Endothelial cell of umbilical vein (primary cell): ENCODE measurements at regions of chr18 and their contacts with region 1.

Region 1: DNA sequence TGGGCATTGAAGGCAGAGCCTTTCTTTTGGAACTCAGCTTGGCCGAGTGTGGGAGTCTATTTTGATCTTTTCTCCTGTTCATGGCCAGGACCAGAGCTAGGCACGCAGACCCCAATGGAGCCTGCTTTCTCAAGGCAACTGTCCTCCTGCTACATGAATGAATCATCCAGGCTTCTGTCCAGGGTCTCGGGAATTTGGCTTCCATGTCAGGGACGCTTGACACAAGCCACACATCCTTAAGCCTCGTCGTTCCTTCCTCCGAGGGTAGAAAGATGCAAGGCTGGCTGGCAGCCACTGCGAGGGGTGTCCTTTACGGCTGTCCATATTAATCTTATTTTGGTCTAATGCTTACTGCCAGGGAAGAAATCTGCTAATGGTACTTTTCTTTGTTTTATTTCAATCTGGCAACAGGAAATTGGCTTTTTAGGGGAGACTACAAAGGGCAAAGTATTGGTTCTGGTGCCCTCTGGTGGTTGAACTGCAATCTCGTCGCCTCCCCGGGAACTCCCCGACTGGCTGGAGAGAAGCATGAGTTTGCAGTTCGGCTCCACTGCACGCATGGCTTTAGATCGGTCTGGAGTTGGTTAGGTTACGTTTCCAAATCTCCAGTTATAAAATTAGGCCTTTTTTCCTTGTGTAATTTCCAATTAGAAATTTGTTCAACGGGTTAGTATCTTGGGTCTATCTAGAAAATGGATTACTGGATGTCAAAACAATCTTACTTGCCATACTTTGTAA is 135.2 kb downstream of the ALPK2 start:
- DNase-seq: peak; percentile 61
- H3K4me3 ChIP-seq: no peak overlapping the region
- H3K27ac ChIP-seq: no peak overlapping the region
- H3K4me1 ChIP-seq: peaks cover 3% of the 10 kb centered on the region
- H3K27me3 ChIP-seq: peaks cover 14 to 20% of the 10 kb centered on the region in 2 experiments
- CTCF ChIP-seq: peak; percentile 84
- POLR2A ChIP-seq: no peak

Region 2: GRCh38 chr18:57959278-57959677 is 534.4 kb before region 1 on chr18:
- CTCF ChIA-PET with region 1: interaction called, 4 read pairs
- POLR2A ChIA-PET with region 1: no interaction called
- dilution Hi-C with region 1: no loop called
- intact Hi-C with region 1: loop called (anchors 1 kb)
- DNase-seq: peak; percentile 59
- H3K4me3 ChIP-seq: no peak overlapping the region
- H3K27ac ChIP-seq: no peak overlapping the region
- H3K4me1 ChIP-seq: peaks cover 3% of the 10 kb centered on the region
- H3K27me3 ChIP-seq: peaks cover 4 to 14% of the 10 kb centered on the region in 2 experiments
- CTCF ChIP-seq: peak; percentile 22 to 44
- POLR2A ChIP-seq: no peak

Region 3: DNA sequence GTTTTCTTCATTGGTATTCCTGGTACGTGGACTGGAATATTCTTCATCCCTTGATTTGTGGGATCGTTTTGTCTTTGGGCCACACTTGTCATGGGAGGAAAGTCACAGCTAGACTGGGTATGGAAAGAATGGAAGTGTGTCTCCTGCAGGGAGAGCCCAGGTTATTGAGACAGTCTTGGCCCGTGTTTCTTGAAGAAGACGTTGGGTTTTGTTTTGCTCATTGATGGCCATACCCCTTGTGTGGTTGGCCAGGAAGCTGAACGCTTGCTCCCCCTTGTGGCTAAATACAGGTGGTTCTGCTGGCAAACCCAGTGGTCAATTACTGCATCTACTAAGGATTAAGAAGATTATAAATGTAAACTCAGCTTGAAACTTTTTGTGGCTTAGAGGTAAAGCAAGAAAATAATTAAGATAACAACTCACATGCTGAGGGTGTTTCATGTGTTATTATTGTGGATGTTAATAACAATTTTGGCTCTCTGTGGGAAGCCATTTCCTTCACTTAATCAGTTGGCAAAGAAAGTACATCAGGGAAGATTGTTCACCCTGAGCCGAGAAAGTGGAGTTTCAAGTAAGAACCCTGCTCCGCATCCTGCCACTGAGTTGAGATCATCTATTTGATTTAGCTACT is 357.9 kb before region 1 on chr18:
- CTCF ChIA-PET with region 1: interaction called, 7 read pairs
- POLR2A ChIA-PET with region 1: no interaction called
- dilution Hi-C with region 1: no loop called
- intact Hi-C with region 1: loop called (anchors 1 kb)
- DNase-seq: peak; percentile 69
- H3K4me3 ChIP-seq: no peak overlapping the region
- H3K27ac ChIP-seq: no peak overlapping the region
- H3K4me1 ChIP-seq: peaks cover 2% of the 10 kb centered on the region
- H3K27me3 ChIP-seq: no peaks in the 10 kb centered on the region
- CTCF ChIP-seq: peak; percentile 85 to 91
- POLR2A ChIP-seq: no peak

Region 4: DNA sequence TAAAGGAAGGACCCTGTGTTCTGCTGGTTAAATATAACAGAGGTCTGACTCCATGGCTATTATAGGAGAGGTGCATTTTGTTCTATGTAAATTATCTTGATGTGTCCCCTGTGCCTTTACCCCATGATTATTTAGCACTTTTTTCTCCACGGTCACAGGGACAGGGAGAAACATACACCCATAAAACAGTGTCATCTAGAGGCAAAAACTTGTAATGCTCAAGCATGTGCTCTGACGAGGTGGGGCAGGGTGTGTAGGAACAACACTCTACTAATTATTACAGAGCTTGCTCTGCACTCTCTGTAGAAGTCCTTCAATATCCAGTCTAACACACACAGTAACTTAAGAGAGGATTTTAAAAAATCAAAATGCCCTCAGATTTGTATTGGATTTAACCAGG is 261.8 kb before region 1 on chr18:
- CTCF ChIA-PET with region 1: no interaction called
- POLR2A ChIA-PET with region 1: no interaction called
- dilution Hi-C with region 1: no loop called
- intact Hi-C with region 1: loop called (anchors 5 kb)
- DNase-seq: peak; percentile 27
- H3K4me3 ChIP-seq: no peak overlapping the region
- H3K27ac ChIP-seq: no peak overlapping the region
- H3K4me1 ChIP-seq: no peaks in the 10 kb centered on the region
- H3K27me3 ChIP-seq: no peaks in the 10 kb centered on the region
- CTCF ChIP-seq: peak in 1 of 2 donors; percentile 19
- POLR2A ChIP-seq: no peak

Region 5: DNA sequence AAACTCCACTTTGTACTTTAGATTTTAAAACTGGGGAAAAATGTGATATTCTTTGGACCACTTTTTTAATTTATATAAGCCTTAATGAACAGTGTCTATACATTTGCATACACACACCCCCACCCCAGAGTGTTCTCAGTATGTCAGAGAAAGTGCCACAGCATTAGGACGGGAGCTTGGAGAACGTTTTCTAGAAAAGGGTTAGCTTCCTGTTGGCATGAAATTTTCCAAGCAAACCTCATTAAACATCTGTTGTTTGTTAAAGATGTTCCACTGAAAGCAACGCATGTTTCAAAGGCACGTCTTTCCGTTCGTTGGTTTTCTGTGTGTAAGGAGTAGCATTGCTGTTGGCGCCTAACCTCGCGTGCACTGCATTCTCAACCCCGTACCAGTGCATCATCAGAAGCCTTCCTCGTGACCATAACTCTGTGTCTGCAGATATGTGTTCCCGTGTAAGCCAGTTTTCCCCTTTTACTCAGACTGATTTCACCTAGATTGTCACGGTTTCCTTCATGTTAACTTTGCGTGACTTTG is 93.3 kb before region 1 on chr18:
- CTCF ChIA-PET with region 1: interaction called, 5 read pairs
- POLR2A ChIA-PET with region 1: no interaction called
- dilution Hi-C with region 1: no loop called
- intact Hi-C with region 1: loop called (anchors 1 kb)
- DNase-seq: no peak
- H3K4me3 ChIP-seq: no peak overlapping the region
- H3K27ac ChIP-seq: no peak overlapping the region
- H3K4me1 ChIP-seq: peaks cover 16% of the 10 kb centered on the region
- H3K27me3 ChIP-seq: no peaks in the 10 kb centered on the region
- CTCF ChIP-seq: no peak
- POLR2A ChIP-seq: no peak

Region 6: GRCh38 chr18:58535340-58536201 is 41.9 kb after region 1 on chr18:
- CTCF ChIA-PET with region 1: no interaction called
- POLR2A ChIA-PET with region 1: no interaction called
- dilution Hi-C with region 1: no loop called
- intact Hi-C with region 1: no loop called
- DNase-seq: no peak
- H3K4me3 ChIP-seq: no peak overlapping the region
- H3K27ac ChIP-seq: no peak overlapping the region
- H3K4me1 ChIP-seq: no peaks in the 10 kb centered on the region
- H3K27me3 ChIP-seq: peaks cover 0 to 8% of the 10 kb centered on the region in 2 experiments
- CTCF ChIP-seq: no peak
- POLR2A ChIP-seq: no peak